MCF 10A (cell line): ENCODE measurements at regions of chr4 and their contacts with region 1.

Region 1: GRCh38 chr4:149897783-149898182 is 82.1 kb upstream of the IQCM start:
- DNase-seq: peak; percentile 47
- H3K4me3 Mint-ChIP-seq: no peak overlapping the region
- H3K27ac Mint-ChIP-seq: no peak overlapping the region
- H3K4me1 Mint-ChIP-seq: no peaks in the 10 kb centered on the region
- H3K27me3 Mint-ChIP-seq: no peaks in the 10 kb centered on the region
- CTCF ChIP-seq: peak; percentile 55

Region 2: DNA sequence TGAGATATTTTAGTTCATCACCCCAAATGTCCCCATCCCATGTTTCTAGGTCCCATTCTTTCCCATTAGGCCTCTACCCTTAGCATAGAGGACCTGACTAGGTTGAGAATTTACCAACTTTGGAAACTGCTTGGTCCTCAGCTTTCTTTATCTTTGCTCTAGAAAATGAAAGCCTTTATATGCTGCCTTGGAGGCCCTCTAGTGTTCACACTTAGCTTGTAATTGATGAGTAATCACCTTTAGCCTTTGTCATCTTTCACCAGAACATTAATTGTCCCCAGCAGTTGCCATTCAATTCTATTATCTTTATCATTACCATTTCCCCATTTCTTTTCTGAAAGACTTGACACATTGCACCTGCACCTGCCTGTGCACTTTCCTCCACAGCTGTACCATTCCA is 866.4 kb before region 1 on chr4:
- CTCF ChIA-PET with region 1: interaction called, 3 read pairs
- POLR2A ChIA-PET with region 1: no interaction called
- intact Hi-C with region 1: loop called (anchors 5 kb)
- DNase-seq: peak; percentile 54
- H3K4me3 Mint-ChIP-seq: no peak overlapping the region
- H3K27ac Mint-ChIP-seq: no peak overlapping the region
- H3K4me1 Mint-ChIP-seq: no peaks in the 10 kb centered on the region
- H3K27me3 Mint-ChIP-seq: no peaks in the 10 kb centered on the region
- CTCF ChIP-seq: peak; percentile 29

Region 3: GRCh38 chr4:149370785-149371420 is 526.9 kb before region 1 on chr4:
- CTCF ChIA-PET with region 1: interaction called, 33 read pairs
- POLR2A ChIA-PET with region 1: no interaction called
- intact Hi-C with region 1: loop called (anchors 1 kb)
- DNase-seq: peak; percentile 72
- H3K4me3 Mint-ChIP-seq: no peak overlapping the region
- H3K27ac Mint-ChIP-seq: no peak overlapping the region
- H3K4me1 Mint-ChIP-seq: no peaks in the 10 kb centered on the region
- H3K27me3 Mint-ChIP-seq: no peaks in the 10 kb centered on the region
- CTCF ChIP-seq: peak; percentile 55

Region 4: GRCh38 chr4:149493492-149493891 is 404.3 kb before region 1 on chr4:
- CTCF ChIA-PET with region 1: no interaction called
- POLR2A ChIA-PET with region 1: no interaction called
- intact Hi-C with region 1: loop called (anchors 10 kb)
- DNase-seq: no peak
- H3K4me3 Mint-ChIP-seq: no peak overlapping the region
- H3K27ac Mint-ChIP-seq: no peak overlapping the region
- H3K4me1 Mint-ChIP-seq: no peaks in the 10 kb centered on the region
- H3K27me3 Mint-ChIP-seq: no peaks in the 10 kb centered on the region
- CTCF ChIP-seq: no peak

Region 5: DNA sequence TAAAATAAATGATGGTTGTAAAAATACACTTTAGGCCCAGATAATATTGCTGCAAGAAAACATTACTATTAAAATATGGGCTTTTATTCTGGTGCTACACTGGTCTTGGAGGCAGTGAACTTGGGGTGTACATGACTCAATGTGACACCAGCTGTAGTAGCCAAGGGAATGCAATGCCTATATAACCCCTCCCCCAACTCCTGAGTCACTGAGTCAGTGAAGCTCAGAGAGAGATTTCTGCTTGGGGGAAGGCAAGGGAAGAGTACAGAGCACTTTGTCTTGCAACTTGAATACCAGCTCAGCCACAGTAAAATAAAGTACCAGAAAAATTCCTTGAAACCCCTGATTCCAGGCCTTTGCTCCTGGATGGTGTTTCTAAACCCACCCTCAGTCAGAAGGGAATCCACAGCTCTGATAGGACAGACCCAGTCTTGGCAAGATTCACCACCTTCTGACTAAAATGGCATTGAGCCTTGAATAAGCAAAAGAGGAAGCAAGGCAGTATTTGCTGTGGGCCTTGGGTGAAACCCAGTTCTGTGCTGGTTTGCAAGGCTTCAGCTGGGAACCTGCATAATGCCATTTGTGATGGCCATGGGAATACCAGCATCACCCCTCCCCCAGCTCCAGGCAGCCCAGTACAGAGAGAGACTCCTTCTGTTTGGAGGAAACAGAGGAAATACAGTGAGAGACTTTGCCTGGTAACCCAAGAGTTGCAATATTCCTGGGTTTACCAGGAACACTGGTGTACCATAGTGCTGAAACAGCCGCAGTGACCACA is 292.0 kb before region 1 on chr4:
- CTCF ChIA-PET with region 1: no interaction called
- POLR2A ChIA-PET with region 1: no interaction called
- intact Hi-C with region 1: loop called (anchors 10 kb)
- DNase-seq: peak; percentile 54
- H3K4me3 Mint-ChIP-seq: no peak overlapping the region
- H3K27ac Mint-ChIP-seq: no peak overlapping the region
- H3K4me1 Mint-ChIP-seq: no peaks in the 10 kb centered on the region
- H3K27me3 Mint-ChIP-seq: no peaks in the 10 kb centered on the region
- CTCF ChIP-seq: no peak

Region 6: DNA sequence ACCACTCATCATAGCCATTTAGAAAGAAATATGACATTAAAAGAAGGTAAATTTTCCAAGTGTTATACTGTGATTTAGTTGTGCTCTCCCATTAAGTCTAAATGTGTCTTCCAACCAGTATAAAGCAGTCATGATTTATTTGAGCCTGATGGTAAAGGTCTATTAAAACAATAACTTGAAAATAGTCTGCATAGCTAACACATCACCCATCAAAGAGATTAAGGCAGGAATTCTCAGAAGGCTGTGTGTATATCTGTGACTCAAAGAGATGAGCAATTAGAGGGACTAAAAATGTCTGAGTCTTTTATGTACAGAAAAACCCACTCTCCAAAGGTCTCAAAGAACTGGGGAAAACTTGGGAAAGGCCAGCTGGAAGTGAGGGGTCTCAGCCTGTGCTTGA is 11.9 kb before region 1 on chr4:
- CTCF ChIA-PET with region 1: interaction called, 12 read pairs
- POLR2A ChIA-PET with region 1: no interaction called
- intact Hi-C with region 1: no loop called
- DNase-seq: no peak
- H3K4me3 Mint-ChIP-seq: no peak overlapping the region
- H3K27ac Mint-ChIP-seq: no peak overlapping the region
- H3K4me1 Mint-ChIP-seq: peaks cover 14% of the 10 kb centered on the region
- H3K27me3 Mint-ChIP-seq: no peaks in the 10 kb centered on the region
- CTCF ChIP-seq: no peak